Activated CD4-positive, alpha-beta memory T cell treated with anti-CD3 and anti-CD28 coated beads for 36 hours (primary cell): ENCODE measurements at regions of chr10 and their contacts with region 1.

Region 1: DNA sequence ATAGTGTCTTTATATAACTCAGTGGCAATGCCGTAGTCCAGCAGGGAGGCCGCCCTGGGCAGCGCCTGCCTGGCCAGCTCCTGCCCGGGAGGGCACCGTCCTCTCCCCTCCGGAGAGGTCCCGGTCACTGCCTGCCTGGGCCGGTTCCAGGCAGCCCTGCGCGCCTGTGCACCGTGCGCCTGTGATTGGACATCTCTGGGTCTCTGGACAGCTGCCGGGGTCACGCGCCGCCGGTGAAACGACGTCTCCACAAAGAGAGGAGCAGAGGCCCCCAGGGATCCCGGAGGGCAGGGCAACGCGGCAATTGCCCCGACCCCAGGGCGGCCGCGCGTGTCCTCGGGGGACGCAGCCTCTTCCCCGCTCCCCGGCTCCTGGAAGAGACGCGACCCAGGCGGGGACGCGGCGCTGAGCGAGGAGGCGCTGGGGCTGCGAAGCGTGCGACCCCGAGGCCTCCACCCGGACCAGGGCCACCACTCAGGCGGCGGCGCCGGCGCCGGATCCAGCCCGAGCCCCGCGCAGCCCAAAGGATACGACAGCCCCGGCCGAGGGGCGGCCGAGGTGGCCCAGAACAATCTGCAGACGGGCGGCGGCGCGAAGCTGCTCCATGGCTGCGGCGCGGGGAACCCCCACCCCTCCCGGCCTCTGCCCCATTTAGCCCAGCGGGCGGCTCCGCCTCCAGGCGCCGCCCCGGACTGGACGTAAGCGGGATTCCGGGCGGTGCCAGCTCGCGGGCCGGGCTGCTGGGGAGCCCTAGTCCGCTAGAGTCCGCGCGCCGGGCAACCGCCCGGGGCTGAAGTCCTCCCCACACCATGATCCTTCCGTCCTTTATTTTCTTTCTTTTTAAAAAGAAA is at the start of gene PHYH:
- DNase-seq: peak; percentile 85
- H3K4me3 Mint-ChIP-seq: peak within 1 kb of the TSS; percentile 78
- H3K27ac Mint-ChIP-seq: peak within 1 kb of the TSS; percentile 85
- H3K4me1 Mint-ChIP-seq: peaks cover 16% of the 10 kb centered on the region
- H3K27me3 Mint-ChIP-seq: no peaks in the 10 kb centered on the region
- total RNA-seq, gene PHYH: 14.9 to 15.4 TPM

Region 2: DNA sequence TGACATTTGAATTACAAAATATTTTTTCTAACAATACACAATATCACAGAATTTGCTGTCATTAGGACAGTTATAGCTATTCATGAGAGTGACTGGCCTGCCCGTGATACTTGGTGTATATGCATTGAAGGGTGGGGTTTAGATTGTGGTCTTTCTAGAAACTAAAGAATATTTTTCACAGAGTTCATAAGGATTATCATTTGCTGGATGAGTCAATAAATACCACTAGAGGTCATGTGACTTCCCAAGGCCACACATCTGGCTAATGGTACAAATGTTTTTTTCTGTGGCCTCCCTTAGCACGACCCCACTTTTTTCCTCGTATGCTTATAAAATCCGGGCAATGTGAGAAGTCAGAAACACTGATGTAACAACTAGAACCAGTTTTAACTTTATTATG is 194.5 kb before region 1 on chr10:
- CTCF ChIA-PET with region 1: no interaction called
- POLR2A ChIA-PET with region 1: interaction called, 3 read pairs
- intact Hi-C with region 1: loop called (anchors 5 kb)
- DNase-seq: no peak
- H3K4me3 Mint-ChIP-seq: no peak overlapping the region
- H3K27ac Mint-ChIP-seq: peak overlapping the region; percentile 70
- H3K4me1 Mint-ChIP-seq: peaks cover 69% of the 10 kb centered on the region
- H3K27me3 Mint-ChIP-seq: no peaks in the 10 kb centered on the region

Region 3: DNA sequence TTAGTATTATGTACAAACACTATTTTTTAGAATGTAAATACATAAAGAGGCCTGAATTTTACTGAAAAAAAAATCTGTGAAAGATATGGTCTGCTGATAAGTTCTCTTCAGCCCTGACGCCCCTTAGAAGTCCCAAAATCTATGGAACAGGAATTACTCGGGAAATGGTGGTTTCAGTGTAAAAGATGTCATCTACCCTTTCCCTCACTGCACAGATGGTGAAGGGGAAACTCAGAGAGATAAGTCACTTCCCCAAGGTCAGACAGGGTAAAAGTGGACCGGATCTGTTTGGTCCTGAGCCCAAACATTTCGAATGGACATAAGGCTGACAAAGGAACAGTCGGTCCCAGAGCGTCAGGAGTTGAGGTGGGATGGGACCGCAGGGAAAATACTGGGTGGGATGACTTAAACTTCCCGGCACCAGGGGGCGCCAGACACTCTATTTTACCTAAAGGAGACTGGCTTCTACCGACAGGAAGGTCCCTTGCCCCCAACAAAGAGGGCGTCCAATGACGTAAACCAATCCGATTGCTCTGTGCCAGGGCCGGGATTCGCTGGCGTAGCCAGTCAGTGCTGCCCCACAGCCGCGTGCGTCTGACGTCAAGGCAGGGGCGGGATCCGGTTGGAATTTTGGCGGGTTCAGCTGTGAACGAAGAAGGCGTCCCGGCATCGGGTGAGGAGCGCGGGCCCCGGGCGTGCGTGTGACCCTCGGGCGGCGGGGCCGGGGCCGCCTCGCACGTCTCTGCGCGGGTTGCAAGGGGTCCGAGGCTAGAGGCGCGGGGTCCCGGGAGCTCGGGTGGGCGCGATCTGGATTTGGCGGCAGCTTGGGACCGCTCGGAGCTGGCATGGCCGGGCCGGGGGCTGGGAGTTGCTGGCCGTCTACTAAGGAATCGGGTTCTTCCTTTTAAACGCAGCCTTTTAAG is 138.5 kb before region 1 on chr10 and contains the start of gene MCM10:
- CTCF ChIA-PET with region 1: interaction called, 55 read pairs
- POLR2A ChIA-PET with region 1: interaction called, 13 read pairs
- intact Hi-C with region 1: loop called (anchors 1 kb)
- DNase-seq: peak; percentile 99
- H3K4me3 Mint-ChIP-seq: peak within 1 kb of the TSS; percentile 85
- H3K27ac Mint-ChIP-seq: peak within 1 kb of the TSS; percentile 34
- H3K4me1 Mint-ChIP-seq: peaks cover 28% of the 10 kb centered on the region
- H3K27me3 Mint-ChIP-seq: no peaks in the 10 kb centered on the region
- total RNA-seq, gene MCM10: 70.6 to 74.2 TPM

Region 4: GRCh38 chr10:13206546-13207443 is 92.9 kb before region 1 on chr10:
- CTCF ChIA-PET with region 1: interaction called, 23 read pairs
- POLR2A ChIA-PET with region 1: no interaction called
- intact Hi-C with region 1: no loop called
- DNase-seq: no peak
- H3K4me3 Mint-ChIP-seq: no peak overlapping the region
- H3K27ac Mint-ChIP-seq: no peak overlapping the region
- H3K4me1 Mint-ChIP-seq: no peaks in the 10 kb centered on the region
- H3K27me3 Mint-ChIP-seq: no peaks in the 10 kb centered on the region

Region 5: GRCh38 chr10:13271552-13272163 is 28.0 kb before region 1 on chr10:
- CTCF ChIA-PET with region 1: interaction called, 11 read pairs
- POLR2A ChIA-PET with region 1: interaction called, 3 read pairs
- intact Hi-C with region 1: loop called (anchors 1 kb)
- DNase-seq: peak; percentile 71
- H3K4me3 Mint-ChIP-seq: no peak overlapping the region
- H3K27ac Mint-ChIP-seq: no peak overlapping the region
- H3K4me1 Mint-ChIP-seq: peaks cover 7% of the 10 kb centered on the region
- H3K27me3 Mint-ChIP-seq: no peaks in the 10 kb centered on the region

Region 6: DNA sequence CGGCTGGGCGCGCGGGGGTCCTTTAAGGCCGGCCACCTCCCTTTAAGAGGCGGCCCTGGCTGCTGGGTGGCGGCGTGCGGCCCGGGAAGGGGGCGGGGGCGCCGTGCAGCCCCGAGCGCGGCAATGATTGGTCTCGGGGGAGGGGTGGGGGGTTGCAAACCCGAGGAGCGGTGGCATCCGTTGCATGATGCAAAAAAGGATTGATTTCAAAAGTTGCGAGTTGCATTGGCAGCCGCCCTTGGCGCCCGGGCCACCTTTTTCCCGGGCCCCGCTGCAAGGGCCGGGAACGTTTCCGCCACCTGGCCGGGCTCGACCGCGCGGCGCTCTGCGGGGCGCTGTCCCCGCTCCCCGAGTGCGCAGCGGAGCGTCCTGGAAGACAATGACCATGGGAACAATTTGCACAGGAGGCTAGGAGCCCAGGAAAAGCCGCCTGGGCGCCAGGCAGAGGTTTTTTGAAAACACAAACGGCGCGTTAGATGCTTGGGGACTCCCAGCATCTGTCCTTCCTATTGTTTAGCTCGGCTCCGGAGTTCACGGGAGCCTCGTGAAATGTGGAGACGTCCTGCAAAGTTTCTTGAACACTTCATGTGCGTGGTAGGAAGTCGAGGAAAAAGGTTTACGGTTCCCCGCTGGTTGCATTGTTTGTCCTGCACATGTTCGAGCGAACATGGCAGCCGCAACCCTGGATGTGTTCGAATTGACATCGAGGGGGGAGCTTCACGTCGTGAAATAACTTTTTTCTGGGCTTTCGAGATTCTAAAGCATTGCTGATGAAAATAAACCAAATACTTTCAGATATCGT is 48.8 kb after region 1 on chr10 and contains the start of gene SEPHS1:
- CTCF ChIA-PET with region 1: interaction called, 14 read pairs
- POLR2A ChIA-PET with region 1: interaction called, 13 read pairs
- intact Hi-C with region 1: loop called (anchors 1 kb)
- DNase-seq: peak; percentile 91
- H3K4me3 Mint-ChIP-seq: peak within 1 kb of the TSS; percentile 94
- H3K27ac Mint-ChIP-seq: peak within 1 kb of the TSS; percentile 93
- H3K4me1 Mint-ChIP-seq: peaks cover 51% of the 10 kb centered on the region
- H3K27me3 Mint-ChIP-seq: no peaks in the 10 kb centered on the region
- total RNA-seq, gene SEPHS1: 57.2 to 57.6 TPM